ENCODE measurements at regions of chr9 and their contacts with region 1.

Region 1: DNA sequence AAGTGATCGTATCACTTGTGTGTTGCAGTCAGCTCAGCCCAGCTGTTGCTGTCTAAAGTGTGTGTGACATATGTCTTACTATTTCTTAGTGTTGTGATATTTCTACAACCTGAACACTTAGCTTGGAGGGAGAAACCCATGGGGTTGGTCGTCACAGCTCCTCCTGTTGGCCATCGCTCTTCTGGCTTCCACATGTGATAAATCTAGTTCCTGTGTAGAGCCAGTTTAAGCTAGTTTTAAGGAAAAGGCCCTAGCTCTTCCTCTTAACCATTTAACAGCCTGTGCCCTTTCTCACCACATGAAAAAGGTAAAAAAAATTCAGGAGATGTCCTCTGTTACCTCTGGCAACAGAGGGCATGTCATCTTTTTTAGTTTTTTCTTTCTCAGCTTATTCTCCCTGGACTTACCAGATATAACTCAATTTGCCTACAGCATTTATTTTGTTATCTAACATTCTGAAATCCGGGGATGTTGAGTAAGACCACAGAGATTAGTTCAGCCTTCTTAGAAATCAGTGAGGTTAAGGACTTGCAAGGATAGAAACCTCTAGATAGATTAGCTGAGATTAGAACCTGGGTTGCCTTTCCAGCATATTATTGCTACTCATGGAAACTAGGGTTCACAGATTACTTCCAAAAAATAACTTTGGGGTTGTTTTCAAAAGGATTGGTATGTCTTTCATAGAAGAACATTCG is 100.4 kb downstream of the GAPVD1 start:
- DNase-seq: peak; percentile 42 to 76 (median 73)
- H3K4me3 ChIP-seq: no peak overlapping the region
- H3K27ac ChIP-seq: no peak overlapping the region
- H3K4me1 ChIP-seq: no peaks in the 10 kb centered on the region
- H3K27me3 ChIP-seq: no peaks in the 10 kb centered on the region

Region 2: GRCh38 chr9:125374443-125375309 is 12.7 kb after region 1 on chr9:
- CTCF ChIA-PET with region 1: interaction called, 22 read pairs
- POLR2A ChIA-PET with region 1: no interaction called
- DNase-seq: peak; percentile 73 to 85 (median 84)
- H3K4me3 ChIP-seq: peak overlapping the region in 5 of 7 experiments; percentile 36 to 69 (median 58)
- H3K27ac ChIP-seq: no peak overlapping the region
- H3K4me1 ChIP-seq: peaks cover 0 to 8% (median 6%) of the 10 kb centered on the region in 4 experiments
- H3K27me3 ChIP-seq: peaks cover 0 to 5% (median 0%) of the 10 kb centered on the region in 5 experiments

Region 3: DNA sequence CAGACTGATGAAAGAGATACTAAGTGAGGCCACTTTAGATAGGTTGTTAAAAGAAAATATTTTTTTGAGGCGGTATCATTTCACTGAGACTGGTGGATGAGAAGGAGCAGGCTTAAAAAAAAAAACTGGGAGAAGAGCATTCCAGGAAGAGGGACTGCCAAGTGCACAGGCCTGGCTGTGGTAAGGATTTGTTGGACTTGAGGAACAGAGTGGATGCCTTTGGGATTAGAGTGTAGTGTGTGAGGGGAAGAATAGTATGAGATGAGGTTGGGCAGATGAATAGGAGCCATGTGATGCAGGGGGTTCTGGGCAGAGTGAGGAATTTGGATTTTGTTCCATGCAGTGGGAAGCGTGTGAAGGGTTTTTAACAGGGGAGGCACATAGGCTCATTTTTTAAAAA is 443.1 kb after region 1 on chr9:
- CTCF ChIA-PET with region 1: no interaction called
- POLR2A ChIA-PET with region 1: no interaction called
- DNase-seq: no peak
- H3K4me3 ChIP-seq: no peak overlapping the region
- H3K27ac ChIP-seq: no peak overlapping the region
- H3K4me1 ChIP-seq: no peaks in the 10 kb centered on the region
- H3K27me3 ChIP-seq: no peaks in the 10 kb centered on the region

Measured in common myeloid progenitor, CD34-positive (primary cell).